Activated naive CD8-positive, alpha-beta T cell treated with anti-CD3 and anti-CD28 coated beads, Interleukin-2, amount 10 ng/mL, durations not matched to agents 7 days and 5 days (primary cell): ENCODE measurements at regions of chr15 and their contacts with region 1.

Region 1: DNA sequence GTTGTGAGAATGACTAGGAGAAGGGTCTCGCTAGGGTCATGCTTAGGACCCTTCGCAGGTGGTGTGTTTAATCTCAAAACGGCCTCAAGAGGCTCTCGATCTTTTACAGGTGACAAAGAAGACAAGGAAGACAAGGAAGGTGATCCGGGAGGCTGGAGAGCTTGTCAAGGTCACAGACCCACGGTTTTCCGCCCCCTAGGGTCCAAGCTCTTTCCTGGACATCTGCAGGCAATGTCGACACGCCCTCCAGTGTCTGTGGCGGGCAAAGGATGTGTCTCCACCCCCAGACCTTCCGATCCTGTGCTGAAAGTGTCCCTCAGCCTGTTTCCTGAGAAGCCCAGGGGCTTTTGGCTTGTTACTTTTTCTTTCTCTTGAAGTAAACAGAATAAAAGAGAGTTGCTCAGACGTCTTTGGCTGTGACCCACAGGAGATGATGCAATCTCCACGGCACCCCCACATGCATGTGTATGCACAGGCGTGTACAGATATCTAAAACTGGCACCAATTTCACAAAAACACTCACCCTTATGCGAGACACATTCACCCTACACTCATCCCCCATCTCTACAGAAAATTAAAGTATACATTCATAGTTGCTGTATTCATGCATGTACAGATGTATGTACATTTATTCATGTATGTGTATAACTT is 108.8 kb downstream of the KLF13 start:
- DNase-seq: peak; percentile 77
- ATAC-seq: peak; percentile 72
- H3K4me3 Mint-ChIP-seq: peak overlapping the region; percentile 66
- H3K27ac Mint-ChIP-seq: peak overlapping the region; percentile 91
- H3K4me1 Mint-ChIP-seq: peaks cover 67% of the 10 kb centered on the region
- H3K27me3 Mint-ChIP-seq: no peaks in the 10 kb centered on the region

Region 2: GRCh38 chr15:31215490-31216214 is 219.7 kb before region 1 on chr15:
- POLR2A ChIA-PET with region 1: interaction called, 19 read pairs
- DNase-seq: peak; percentile 92
- ATAC-seq: peak; percentile 74
- H3K4me3 Mint-ChIP-seq: peak overlapping the region; percentile 72
- H3K27ac Mint-ChIP-seq: peak overlapping the region; percentile 96
- H3K4me1 Mint-ChIP-seq: peaks cover 29% of the 10 kb centered on the region
- H3K27me3 Mint-ChIP-seq: peaks cover 3% of the 10 kb centered on the region

Region 3: DNA sequence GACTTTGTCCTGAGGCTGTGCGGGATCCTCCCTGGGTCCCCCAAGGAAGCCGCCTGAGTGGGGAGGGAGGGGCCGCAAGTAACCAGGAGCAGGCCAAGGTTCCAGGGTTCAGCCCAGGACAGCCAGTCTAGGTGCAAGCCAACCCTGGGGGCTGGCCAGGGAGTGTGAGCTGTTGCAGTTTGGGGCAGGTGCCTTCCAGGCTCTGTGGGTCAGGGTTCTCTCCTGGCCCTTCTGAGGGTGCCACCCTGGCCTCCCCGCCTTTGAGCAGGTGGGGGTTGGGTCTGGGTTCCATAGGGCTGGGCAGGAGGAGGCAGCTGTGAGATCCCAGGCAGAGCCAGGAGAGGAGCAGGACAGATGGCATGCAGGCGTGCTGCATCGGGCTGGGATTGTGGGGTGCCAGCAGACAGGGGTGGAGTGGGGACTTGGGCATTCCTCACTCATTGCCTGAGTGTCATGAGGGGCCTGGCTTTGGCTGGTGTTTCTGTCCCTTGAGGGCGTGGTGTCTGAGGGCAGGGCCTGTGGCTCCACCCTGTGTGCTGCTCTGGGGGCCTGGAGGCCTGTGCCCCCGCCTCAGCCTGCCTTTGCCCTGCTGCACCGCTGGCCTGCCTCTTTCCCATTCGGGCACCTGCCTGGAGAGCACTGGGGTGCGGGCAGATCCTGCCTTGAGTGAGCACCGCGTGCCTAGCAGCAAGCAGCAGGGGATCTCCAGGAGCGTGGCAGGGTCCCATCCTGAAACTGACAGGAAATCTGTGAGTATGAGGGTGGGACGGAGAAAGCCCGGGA is 90.4 kb before region 1 on chr15:
- POLR2A ChIA-PET with region 1: interaction called, 25 read pairs
- DNase-seq: peak; percentile 65
- ATAC-seq: peak; percentile 32
- H3K4me3 Mint-ChIP-seq: peak overlapping the region; percentile 95
- H3K27ac Mint-ChIP-seq: peak overlapping the region; percentile 100
- H3K4me1 Mint-ChIP-seq: peaks cover 85% of the 10 kb centered on the region
- H3K27me3 Mint-ChIP-seq: no peaks in the 10 kb centered on the region

Region 4: GRCh38 chr15:31381801-31382712 is 53.3 kb before region 1 on chr15:
- POLR2A ChIA-PET with region 1: interaction called, 17 read pairs
- DNase-seq: no peak
- ATAC-seq: no peak
- H3K4me3 Mint-ChIP-seq: no peak overlapping the region
- H3K27ac Mint-ChIP-seq: peak overlapping the region; percentile 8
- H3K4me1 Mint-ChIP-seq: peaks cover 45% of the 10 kb centered on the region
- H3K27me3 Mint-ChIP-seq: no peaks in the 10 kb centered on the region

Region 5: GRCh38 chr15:31405200-31405920 is 30.0 kb before region 1 on chr15:
- POLR2A ChIA-PET with region 1: interaction called, 18 read pairs
- DNase-seq: no peak
- ATAC-seq: peak; percentile 70
- H3K4me3 Mint-ChIP-seq: peak overlapping the region; percentile 64
- H3K27ac Mint-ChIP-seq: peak overlapping the region; percentile 90
- H3K4me1 Mint-ChIP-seq: peaks cover 23% of the 10 kb centered on the region
- H3K27me3 Mint-ChIP-seq: peaks cover 1% of the 10 kb centered on the region

Region 6: GRCh38 chr15:31488426-31489204 is 53.2 kb after region 1 on chr15:
- POLR2A ChIA-PET with region 1: interaction called, 48 read pairs
- DNase-seq: peak; percentile 58
- ATAC-seq: peak; percentile 47
- H3K4me3 Mint-ChIP-seq: no peak overlapping the region
- H3K27ac Mint-ChIP-seq: peak overlapping the region; percentile 51
- H3K4me1 Mint-ChIP-seq: peaks cover 30% of the 10 kb centered on the region
- H3K27me3 Mint-ChIP-seq: peaks cover 2% of the 10 kb centered on the region

Region 7: DNA sequence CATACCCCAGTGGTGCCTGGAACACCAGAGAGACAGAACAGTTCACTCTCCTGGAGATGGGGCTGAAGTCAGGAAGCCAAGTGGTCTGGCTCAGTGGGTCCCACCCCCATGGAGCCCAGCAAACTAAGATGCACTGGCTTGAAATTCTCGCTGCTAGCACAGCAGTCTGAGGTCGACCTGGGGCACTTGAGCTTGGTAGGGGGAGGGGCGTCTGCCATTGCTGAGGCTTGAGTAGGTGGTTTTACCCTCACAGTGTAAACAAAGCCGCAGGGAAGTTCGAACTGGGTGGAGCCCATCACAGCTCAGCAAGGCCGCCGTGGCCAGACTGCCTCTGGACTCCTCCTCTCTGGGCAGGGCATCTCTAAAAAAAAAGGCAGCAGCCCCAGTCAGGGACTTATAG is 163.2 kb after region 1 on chr15:
- POLR2A ChIA-PET with region 1: no interaction called
- DNase-seq: no peak
- ATAC-seq: no peak
- H3K4me3 Mint-ChIP-seq: no peak overlapping the region
- H3K27ac Mint-ChIP-seq: no peak overlapping the region
- H3K4me1 Mint-ChIP-seq: no peaks in the 10 kb centered on the region
- H3K27me3 Mint-ChIP-seq: peaks cover 10% of the 10 kb centered on the region